Activated naive CD8-positive, alpha-beta T cell treated with anti-CD3 and anti-CD28 coated beads, Interleukin-2, amount 10 ng/mL, durations not matched to agents 7 days and 5 days (primary cell): ENCODE measurements at regions of chr11 and their contacts with region 1.

Region 1: DNA sequence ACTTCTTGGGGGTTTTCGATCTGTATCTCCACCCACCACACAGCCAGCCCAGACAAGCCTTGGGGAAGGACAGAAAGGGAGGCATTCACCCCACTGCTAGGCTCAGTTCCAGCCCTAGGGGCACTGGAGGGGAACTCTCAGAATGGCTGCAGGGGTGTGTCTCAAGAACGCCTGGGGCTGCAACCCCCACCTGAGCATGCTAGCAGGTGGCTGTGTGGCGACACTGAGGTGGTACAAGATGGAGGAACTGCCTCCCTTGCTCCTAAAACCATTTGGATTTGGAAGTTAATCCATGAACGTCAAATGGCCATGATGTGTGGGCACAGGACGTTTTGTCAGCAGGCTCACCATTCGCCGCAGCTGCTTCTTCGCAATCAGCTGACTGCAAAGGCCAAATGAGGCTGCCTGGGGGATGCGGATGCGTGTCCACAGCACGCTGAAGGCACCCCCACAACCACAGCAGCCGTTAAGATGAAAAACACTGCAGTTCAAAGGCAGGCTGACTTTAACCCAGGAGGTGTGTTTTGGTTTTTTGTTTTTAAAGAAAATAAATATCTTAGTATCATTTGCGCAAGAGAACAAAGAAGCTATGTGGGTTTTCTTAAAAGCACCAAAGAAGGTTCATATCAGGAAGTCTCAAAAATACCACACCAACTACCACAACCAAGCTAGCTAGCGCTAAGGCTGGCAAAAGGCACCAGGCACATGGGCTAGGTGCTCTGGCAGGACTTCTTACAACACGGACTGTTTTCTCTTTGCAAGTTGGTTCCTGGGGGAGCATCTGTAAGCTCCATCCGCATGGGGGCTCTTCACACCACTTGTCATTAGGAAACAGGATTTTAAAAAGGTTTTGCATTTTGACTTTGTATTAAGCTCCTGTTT is 22.2 kb upstream of the NAP1L4 start:
- DNase-seq: peak; percentile 86
- ATAC-seq: peak; percentile 82
- H3K4me3 Mint-ChIP-seq: peak overlapping the region; percentile 48
- H3K27ac Mint-ChIP-seq: peak overlapping the region; percentile 92
- H3K4me1 Mint-ChIP-seq: peaks cover 61% of the 10 kb centered on the region
- H3K27me3 Mint-ChIP-seq: no peaks in the 10 kb centered on the region

Region 2: GRCh38 chr11:2975594-2975993 is 38.7 kb before region 1 on chr11:
- POLR2A ChIA-PET with region 1: interaction called, 14 read pairs
- DNase-seq: no peak
- ATAC-seq: peak; percentile 93
- H3K4me3 Mint-ChIP-seq: no peak overlapping the region
- H3K27ac Mint-ChIP-seq: peak overlapping the region; percentile 56
- H3K4me1 Mint-ChIP-seq: peaks cover 34% of the 10 kb centered on the region
- H3K27me3 Mint-ChIP-seq: no peaks in the 10 kb centered on the region

Region 3: DNA sequence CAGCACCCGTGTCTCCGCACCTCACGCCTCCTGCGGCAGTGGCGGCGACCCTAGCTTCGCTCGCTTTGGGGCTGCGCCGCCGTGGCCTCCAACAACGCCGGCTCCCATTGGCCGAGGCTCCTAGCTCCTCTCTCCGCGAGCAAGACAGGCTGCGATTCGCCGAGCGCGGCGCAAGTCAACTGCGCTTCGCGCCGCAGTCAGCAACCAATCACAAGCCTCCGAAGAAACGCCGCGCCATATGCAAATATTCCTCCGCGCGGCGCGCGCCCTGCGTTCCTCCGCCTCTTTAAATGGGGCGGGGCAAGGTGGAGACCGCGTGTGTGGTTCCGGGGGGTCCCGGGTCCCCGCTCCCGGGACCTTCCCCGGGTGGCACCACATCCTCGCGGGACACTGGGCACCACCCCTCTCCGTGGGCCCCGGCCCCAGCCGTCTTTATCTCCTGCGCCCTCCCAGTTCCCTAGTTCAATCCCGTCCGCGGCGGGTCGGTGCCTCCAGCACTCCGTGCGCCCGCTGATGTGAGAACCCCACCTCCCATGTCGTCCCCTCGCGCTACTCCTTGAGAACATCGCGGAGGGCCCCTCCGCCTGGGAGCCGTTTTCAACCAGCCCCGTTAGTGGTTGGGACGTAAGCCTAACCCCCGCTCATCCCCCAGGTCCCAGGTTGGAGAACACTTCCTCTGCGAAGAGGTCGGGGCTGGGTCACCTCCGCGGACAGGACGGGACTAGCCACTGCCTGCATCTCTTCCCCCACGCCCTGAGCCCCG is 21.9 kb before region 1 on chr11 and contains the start of gene NAP1L4:
- POLR2A ChIA-PET with region 1: interaction called, 303 read pairs
- DNase-seq: peak; percentile 94
- ATAC-seq: peak; percentile 87
- H3K4me3 Mint-ChIP-seq: peak within 1 kb of the TSS; percentile 96
- H3K27ac Mint-ChIP-seq: peak within 1 kb of the TSS; percentile 98
- H3K4me1 Mint-ChIP-seq: peaks cover 11% of the 10 kb centered on the region
- H3K27me3 Mint-ChIP-seq: no peaks in the 10 kb centered on the region
- total RNA-seq, gene NAP1L4: 346 to 363 TPM

Region 4: DNA sequence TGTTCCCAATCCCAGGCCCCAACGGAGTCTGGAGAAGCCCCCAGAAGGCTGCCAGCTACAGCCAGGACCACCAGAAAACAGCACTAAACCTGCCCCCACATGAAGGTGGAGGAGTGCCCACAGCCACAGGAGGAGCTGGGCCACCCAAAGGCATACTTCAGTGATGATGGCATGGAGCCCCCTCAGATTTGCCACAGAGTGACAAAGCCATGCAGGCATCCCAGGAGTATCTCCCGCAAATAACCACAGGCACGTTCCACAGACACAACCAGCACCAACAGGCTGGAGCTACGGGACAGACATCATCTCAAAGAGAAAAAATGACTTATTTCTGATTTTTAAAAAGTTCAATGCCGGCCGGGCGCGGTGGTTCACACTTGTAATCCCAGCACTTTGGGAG is 32.3 kb after region 1 on chr11:
- POLR2A ChIA-PET with region 1: no interaction called
- DNase-seq: no peak
- ATAC-seq: no peak
- H3K4me3 Mint-ChIP-seq: no peak overlapping the region
- H3K27ac Mint-ChIP-seq: no peak overlapping the region
- H3K4me1 Mint-ChIP-seq: peaks cover 8% of the 10 kb centered on the region
- H3K27me3 Mint-ChIP-seq: no peaks in the 10 kb centered on the region

Region 5: DNA sequence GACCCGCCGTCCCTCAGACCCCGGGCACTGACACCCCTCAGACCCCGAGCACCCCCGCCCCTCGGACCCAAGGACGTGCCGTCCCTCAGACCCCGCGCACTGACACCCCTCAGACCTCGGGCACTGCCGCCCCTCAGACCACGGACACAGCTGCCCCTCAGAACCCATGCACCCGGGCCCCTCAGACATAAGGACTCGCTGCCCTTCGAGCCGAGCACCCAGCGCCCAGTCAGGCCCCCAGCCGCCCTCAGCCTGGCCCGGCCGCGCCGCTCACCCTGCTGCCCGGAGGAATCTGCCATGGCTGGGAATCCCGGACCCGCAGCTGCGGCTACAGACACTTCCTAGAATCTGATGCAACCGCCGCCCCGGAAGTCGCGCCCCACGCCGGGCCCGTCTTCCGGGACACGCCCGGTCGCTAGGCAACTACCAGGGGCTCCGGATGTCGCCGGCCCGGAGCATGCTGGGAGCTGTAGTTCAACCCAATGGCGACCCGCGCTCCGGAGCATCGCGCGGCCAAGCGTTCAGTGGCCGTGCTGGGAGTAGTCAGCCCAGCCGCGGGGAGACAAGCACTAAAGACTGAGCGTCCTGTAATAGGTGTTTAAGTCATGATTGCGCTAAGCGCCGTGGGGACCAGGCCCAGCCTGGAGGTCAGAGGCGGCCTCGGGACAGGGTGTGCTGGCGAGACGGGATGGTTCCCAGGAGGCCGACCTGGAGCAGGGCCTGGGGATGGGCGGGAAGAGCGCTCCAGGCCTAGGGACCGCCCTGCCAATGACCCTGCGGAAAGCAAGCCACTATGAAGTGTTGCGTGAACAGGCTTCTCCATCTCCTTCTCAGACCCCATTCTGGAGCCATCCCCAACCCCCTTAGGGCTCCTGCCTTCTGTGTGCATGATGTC is 43.0 kb after region 1 on chr11 and contains the start of gene CARS1:
- POLR2A ChIA-PET with region 1: interaction called, 13 read pairs
- DNase-seq: peak; percentile 95
- ATAC-seq: peak; percentile 94
- H3K4me3 Mint-ChIP-seq: peak within 1 kb of the TSS; percentile 87
- H3K27ac Mint-ChIP-seq: peak within 1 kb of the TSS; percentile 88
- H3K4me1 Mint-ChIP-seq: peaks cover 32% of the 10 kb centered on the region
- H3K27me3 Mint-ChIP-seq: peaks cover 7% of the 10 kb centered on the region
- total RNA-seq, gene CARS1: 100 to 111 TPM